ENCODE measurements at regions of chr4 and their contacts with region 1.

Region 1: GRCh38 chr4:75653845-75654503 is 19.2 kb downstream of the G3BP2 start:
- DNase-seq: peak; percentile 46
- H3K4me3 ChIP-seq: no peak overlapping the region
- H3K27ac ChIP-seq: no peak overlapping the region
- H3K4me1 ChIP-seq: peaks cover 3% of the 10 kb centered on the region
- H3K27me3 ChIP-seq: no peaks in the 10 kb centered on the region
- CTCF ChIP-seq: peak; percentile 56 to 70

Region 2: GRCh38 chr4:75584067-75584466 is 69.9 kb before region 1 on chr4:
- CTCF ChIA-PET with region 1: no interaction called
- dilution Hi-C with region 1: no loop called
- in situ Hi-C with region 1: no loop called
- intact Hi-C with region 1: no loop called
- DNase-seq: no peak
- H3K4me3 ChIP-seq: no peak overlapping the region
- H3K27ac ChIP-seq: no peak overlapping the region
- H3K4me1 ChIP-seq: no peaks in the 10 kb centered on the region
- H3K27me3 ChIP-seq: no peaks in the 10 kb centered on the region
- CTCF ChIP-seq: no peak

Region 3: GRCh38 chr4:75673027-75673958 is 19.3 kb after region 1 on chr4 and contains the start of gene G3BP2:
- CTCF ChIA-PET with region 1: no interaction called
- dilution Hi-C with region 1: no loop called
- in situ Hi-C with region 1: no loop called
- intact Hi-C with region 1: loop called (anchors 1 kb)
- DNase-seq: peak; percentile 98
- H3K4me3 ChIP-seq: peak within 1 kb of the TSS; percentile 92 to 95 (median 94)
- H3K27ac ChIP-seq: peak within 1 kb of the TSS; percentile 91
- H3K4me1 ChIP-seq: peaks cover 15% of the 10 kb centered on the region
- H3K27me3 ChIP-seq: no peaks in the 10 kb centered on the region
- CTCF ChIP-seq: no peak
- total RNA-seq, gene G3BP2: 146 to 192 TPM

Region 4: DNA sequence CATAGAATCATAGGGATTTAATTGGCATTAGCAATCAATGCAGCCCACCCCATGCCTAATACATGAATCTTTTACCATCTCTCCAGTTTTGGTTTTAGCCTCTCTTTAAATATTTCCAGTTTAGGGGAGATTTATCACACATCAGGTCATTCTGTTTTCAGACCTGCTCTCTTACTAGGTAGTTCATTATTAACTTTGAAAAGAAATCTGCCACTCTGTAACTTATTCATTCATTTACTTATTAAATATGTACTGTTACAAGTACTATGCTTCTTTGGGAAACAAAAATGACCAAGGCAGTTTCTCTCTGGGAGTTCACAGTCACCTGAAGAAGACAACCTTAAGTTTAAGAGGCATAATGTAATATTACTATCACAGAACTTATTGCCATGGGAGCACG is 132.6 kb after region 1 on chr4:
- CTCF ChIA-PET with region 1: no interaction called
- dilution Hi-C with region 1: no loop called
- in situ Hi-C with region 1: no loop called
- intact Hi-C with region 1: loop called (anchors 10 kb)
- DNase-seq: no peak
- H3K4me3 ChIP-seq: no peak overlapping the region
- H3K27ac ChIP-seq: no peak overlapping the region
- H3K4me1 ChIP-seq: no peaks in the 10 kb centered on the region
- H3K27me3 ChIP-seq: no peaks in the 10 kb centered on the region
- CTCF ChIP-seq: no peak

Region 5: DNA sequence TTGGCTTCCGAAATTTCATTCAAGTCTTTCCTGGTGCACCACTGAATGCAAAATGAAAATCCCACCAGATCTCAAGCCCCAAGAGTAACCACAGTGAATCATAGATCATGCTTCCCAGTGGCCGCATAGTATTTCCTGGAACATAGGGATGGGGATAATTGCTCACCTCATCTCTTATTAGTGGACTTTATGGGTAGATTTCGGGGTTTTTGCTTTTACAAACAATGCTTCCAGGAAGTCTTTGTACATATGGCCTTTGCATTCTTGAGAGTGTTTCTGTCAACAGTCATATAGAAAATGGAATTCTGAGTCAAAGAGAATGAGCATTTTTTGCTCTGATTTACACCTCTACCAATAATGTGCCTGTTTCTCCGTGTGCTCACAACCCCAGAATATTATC is 194.9 kb after region 1 on chr4:
- CTCF ChIA-PET with region 1: no interaction called
- dilution Hi-C with region 1: no loop called
- in situ Hi-C with region 1: no loop called
- intact Hi-C with region 1: loop called (anchors 1 kb)
- DNase-seq: peak; percentile 15
- H3K4me3 ChIP-seq: no peak overlapping the region
- H3K27ac ChIP-seq: no peak overlapping the region
- H3K4me1 ChIP-seq: peaks cover 3% of the 10 kb centered on the region
- H3K27me3 ChIP-seq: no peaks in the 10 kb centered on the region
- CTCF ChIP-seq: no peak

Measured in mammary epithelial cell (primary cell).